ENCODE measurements at regions of chr4 and their contacts with region 1.

Region 1: GRCh38 chr4:142567199-142567598 is 278.9 kb downstream of the INPP4B start:
- DNase-seq: peak; percentile 53
- H3K4me3 Mint-ChIP-seq: peak overlapping the region; percentile 88
- H3K27ac Mint-ChIP-seq: peak overlapping the region; percentile 94
- H3K4me1 Mint-ChIP-seq: peaks cover 55% of the 10 kb centered on the region
- H3K27me3 Mint-ChIP-seq: no peaks in the 10 kb centered on the region

Region 2: DNA sequence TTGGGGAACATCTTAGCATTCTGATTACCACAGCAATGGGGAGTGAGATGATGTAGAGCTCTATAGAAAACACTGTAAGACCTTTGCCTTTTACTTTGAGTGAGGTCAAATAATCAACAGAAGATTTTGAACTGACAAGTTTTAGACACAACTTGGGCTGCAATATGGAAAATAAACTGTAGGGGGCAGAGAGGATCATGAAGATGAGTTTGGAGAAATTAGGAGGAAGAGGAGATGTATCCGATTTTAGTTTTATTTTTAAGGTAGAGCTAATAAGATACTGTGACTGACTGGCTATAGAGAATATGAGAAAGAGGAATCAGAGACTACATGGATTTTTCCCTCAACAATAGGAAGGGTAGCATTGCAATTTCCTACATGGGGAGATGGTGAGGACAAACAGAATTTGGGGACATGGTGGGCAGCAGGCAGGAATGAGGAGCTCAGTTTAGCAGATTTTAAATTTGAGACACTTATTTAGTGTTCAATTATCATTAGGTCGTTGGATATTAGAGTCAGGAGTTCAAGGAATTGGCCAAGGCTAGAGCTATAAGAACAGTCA is 284.2 kb before region 1 on chr4:
- intact Hi-C with region 1: loop called (anchors 5 kb)
- DNase-seq: no peak
- H3K4me3 Mint-ChIP-seq: no peak overlapping the region
- H3K27ac Mint-ChIP-seq: no peak overlapping the region
- H3K4me1 Mint-ChIP-seq: peaks cover 15% of the 10 kb centered on the region
- H3K27me3 Mint-ChIP-seq: no peaks in the 10 kb centered on the region

Region 3: DNA sequence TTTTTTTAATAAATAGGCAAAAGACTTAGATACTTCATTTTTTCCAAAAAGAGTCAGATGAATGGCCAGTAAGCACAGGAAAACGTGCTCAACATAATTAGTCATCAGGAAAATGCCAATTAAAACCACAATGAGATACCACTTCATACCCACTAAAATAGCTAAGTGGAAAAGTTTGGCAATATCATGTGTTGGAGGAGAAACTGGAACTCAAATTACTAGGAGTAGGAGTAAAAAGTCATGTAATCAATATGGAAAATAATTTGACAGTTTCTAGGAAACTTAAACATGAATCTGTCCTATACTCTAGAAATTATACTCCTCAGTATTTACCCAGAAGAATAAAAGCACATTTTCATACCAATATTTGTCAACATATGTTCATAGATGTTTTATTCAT is 170.9 kb before region 1 on chr4:
- intact Hi-C with region 1: loop called (anchors 1 kb)
- DNase-seq: no peak
- H3K4me3 Mint-ChIP-seq: peak overlapping the region; percentile 68
- H3K27ac Mint-ChIP-seq: peak overlapping the region; percentile 93
- H3K4me1 Mint-ChIP-seq: peaks cover 63% of the 10 kb centered on the region
- H3K27me3 Mint-ChIP-seq: no peaks in the 10 kb centered on the region

Region 4: DNA sequence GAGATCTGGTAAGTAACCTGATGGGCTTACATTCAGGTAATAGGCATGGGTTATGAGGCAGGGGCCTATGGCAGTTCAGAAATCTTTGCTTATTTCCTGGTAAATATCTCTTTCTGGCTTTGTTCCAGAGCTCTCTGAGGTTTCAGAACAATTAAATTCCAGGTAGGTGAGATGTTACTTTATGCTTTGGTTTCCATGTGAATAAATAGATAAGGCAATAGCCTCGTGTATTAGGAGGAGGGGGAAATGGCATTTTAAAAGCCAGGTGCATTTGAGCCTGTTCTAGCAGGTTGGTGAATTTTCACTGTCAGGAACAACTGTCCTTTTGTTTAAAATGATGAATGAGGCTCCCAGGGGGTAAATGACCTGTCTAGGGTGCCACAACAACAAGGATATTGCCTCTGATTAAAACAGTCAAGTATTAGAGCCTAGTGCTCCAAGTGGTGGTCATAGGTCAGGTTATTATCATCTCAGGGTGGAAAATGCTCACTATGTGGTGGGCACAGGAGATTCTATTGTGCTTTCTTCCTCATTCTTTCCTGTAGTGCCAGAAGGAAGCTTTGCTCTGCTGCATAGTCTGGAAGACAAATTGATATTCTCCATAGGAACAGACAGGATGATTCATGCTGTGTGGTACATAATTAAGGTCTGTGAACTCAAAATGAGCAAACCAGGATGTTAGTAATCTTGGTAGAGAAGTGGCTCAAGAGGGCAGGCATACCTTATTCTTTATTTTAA is 17.3 kb before region 1 on chr4:
- intact Hi-C with region 1: loop called (anchors 1 kb)
- DNase-seq: no peak
- H3K4me3 Mint-ChIP-seq: no peak overlapping the region
- H3K27ac Mint-ChIP-seq: peak overlapping the region; percentile 68
- H3K4me1 Mint-ChIP-seq: peaks cover 59% of the 10 kb centered on the region
- H3K27me3 Mint-ChIP-seq: no peaks in the 10 kb centered on the region

Region 5: GRCh38 chr4:142817442-142817841 is 250.2 kb after region 1 on chr4:
- intact Hi-C with region 1: loop called (anchors 5 kb)
- DNase-seq: peak; percentile 26
- H3K4me3 Mint-ChIP-seq: no peak overlapping the region
- H3K27ac Mint-ChIP-seq: peak overlapping the region; percentile 78
- H3K4me1 Mint-ChIP-seq: peaks cover 23% of the 10 kb centered on the region
- H3K27me3 Mint-ChIP-seq: no peaks in the 10 kb centered on the region

Region 6: GRCh38 chr4:143513306-143514168 is 946.3 kb after region 1 on chr4 and contains the start of gene SMARCA5:
- intact Hi-C with region 1: loop called (anchors 10 kb)
- DNase-seq: peak; percentile 97
- H3K4me3 Mint-ChIP-seq: peak within 1 kb of the TSS; percentile 98
- H3K27ac Mint-ChIP-seq: peak within 1 kb of the TSS; percentile 90
- H3K4me1 Mint-ChIP-seq: peaks cover 23% of the 10 kb centered on the region
- H3K27me3 Mint-ChIP-seq: peaks cover 16% of the 10 kb centered on the region
- total RNA-seq, gene SMARCA5: 56.6 and 57.8 TPM in 2 replicates